Colonic mucosa (tissue), 4 donors: ENCODE measurements at regions of chr9 and their contacts with region 1.

Region 1: GRCh38 chr9:89919169-89919681 is 314.4 kb downstream of the GADD45G start:
- DNase-seq: peak; percentile 67
- H3K4me3 ChIP-seq: no peak overlapping the region
- H3K27ac ChIP-seq: no peak overlapping the region
- H3K4me1 ChIP-seq: no peaks in the 10 kb centered on the region
- H3K27me3 ChIP-seq: no peaks in the 10 kb centered on the region
- CTCF ChIP-seq: no peak

Region 2: GRCh38 chr9:89619019-89619418 is 300.2 kb before region 1 on chr9:
- intact Hi-C with region 1: loop called (anchors 5 kb)
- DNase-seq: no peak
- H3K4me3 ChIP-seq: no peak overlapping the region
- H3K27ac ChIP-seq: no peak overlapping the region
- H3K4me1 ChIP-seq: no peaks in the 10 kb centered on the region
- H3K27me3 ChIP-seq: no peaks in the 10 kb centered on the region
- CTCF ChIP-seq: no peak